ENCODE measurements at regions of chr3 and their contacts with region 1.

Region 1: GRCh38 chr3:38651154-38651789 is 1.8 kb upstream of the SCN5A start:
- DNase-seq: peak; percentile 80
- ATAC-seq: peak; percentile 73
- H3K4me3 Mint-ChIP-seq: no peak overlapping the region
- H3K27ac Mint-ChIP-seq: no peak overlapping the region
- H3K4me1 Mint-ChIP-seq: peaks cover 8% of the 10 kb centered on the region
- H3K27me3 Mint-ChIP-seq: peaks cover 19% of the 10 kb centered on the region
- CTCF ChIP-seq: peak; percentile 97

Region 2: DNA sequence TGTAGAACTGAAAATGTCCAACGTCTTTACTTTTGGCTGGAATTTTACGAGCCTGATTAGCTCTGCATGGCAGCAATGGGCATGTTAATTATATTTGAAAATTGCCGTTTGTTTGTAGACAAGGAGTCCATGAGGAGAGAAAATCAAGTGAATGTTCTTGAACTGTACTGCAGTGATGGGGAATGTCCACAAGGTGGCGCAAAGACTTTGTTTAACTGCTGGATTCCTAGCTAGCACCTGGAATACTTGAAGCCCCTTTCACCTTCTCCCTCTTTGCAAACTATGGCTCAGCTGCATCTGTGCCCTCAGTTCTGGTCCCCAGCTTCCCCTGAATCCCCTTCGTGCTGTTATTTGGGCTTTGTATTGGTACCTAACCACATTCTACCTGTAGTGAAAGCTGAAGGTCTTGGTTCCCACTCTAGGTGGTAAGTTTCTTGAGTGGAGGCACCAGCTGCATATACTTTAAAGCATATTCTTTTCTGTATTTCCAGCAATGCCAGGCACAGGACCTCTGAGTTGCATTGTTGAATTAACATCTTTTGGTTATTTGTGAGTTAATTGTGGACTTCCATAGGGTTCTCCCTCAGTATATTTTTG is 129.8 kb before region 1 on chr3:
- CTCF ChIA-PET with region 1: interaction called, 190 read pairs
- POLR2A ChIA-PET with region 1: interaction called, 3 read pairs
- intact Hi-C with region 1: loop called (anchors 2 kb)
- DNase-seq: peak; percentile 78
- ATAC-seq: peak; percentile 85
- H3K4me3 Mint-ChIP-seq: no peak overlapping the region
- H3K27ac Mint-ChIP-seq: no peak overlapping the region
- H3K4me1 Mint-ChIP-seq: peaks cover 22% of the 10 kb centered on the region
- H3K27me3 Mint-ChIP-seq: no peaks in the 10 kb centered on the region
- CTCF ChIP-seq: peak; percentile 93

Region 3: GRCh38 chr3:38662544-38662943 is 11.3 kb after region 1 on chr3:
- CTCF ChIA-PET with region 1: interaction called, 21 read pairs
- POLR2A ChIA-PET with region 1: interaction called, 3 read pairs
- intact Hi-C with region 1: no loop called
- DNase-seq: no peak
- ATAC-seq: no peak
- H3K4me3 Mint-ChIP-seq: no peak overlapping the region
- H3K27ac Mint-ChIP-seq: no peak overlapping the region
- H3K4me1 Mint-ChIP-seq: no peaks in the 10 kb centered on the region
- H3K27me3 Mint-ChIP-seq: peaks cover 28% of the 10 kb centered on the region
- CTCF ChIP-seq: peak; percentile 39

Region 4: DNA sequence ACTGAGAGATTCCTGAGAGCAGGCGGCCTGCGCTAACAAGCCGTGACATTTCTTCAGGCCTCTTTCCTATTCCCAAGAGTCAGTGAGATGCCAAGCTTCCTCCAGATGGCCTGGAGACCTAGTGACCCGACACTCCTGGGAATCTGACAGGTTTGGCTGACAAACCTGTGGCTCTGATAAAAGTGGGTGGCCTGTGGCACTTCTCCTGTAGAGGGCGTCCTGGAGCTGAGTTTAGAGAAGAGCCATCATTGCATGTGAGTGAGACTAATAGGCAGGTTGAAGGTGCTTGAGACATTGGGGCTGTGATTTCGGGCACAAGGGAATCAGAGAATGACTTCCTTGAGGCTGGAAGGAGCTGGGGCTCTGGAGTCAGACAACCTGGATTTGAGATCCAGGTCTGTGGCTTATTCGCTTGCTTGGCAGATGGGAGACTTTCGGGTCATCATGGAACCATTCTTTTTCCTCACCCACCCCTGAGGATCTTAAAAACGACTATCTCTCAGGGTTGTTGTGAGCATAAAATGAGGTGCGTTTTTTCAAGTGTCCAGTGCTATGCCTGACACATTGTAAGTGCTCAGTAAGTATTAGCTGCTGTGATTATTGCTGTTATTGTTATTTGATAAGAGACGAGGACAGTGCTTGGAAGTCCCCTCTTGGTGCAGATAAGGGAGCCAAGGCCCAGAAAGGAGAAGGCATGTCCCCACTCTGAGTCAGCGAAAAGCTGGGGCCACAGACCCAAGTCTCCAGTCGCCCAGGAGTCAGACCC is 87.5 kb after region 1 on chr3:
- CTCF ChIA-PET with region 1: no interaction called
- POLR2A ChIA-PET with region 1: no interaction called
- intact Hi-C with region 1: no loop called
- DNase-seq: peak; percentile 74
- ATAC-seq: no peak
- H3K4me3 Mint-ChIP-seq: no peak overlapping the region
- H3K27ac Mint-ChIP-seq: no peak overlapping the region
- H3K4me1 Mint-ChIP-seq: no peaks in the 10 kb centered on the region
- H3K27me3 Mint-ChIP-seq: peaks cover 19% of the 10 kb centered on the region
- CTCF ChIP-seq: peak; percentile 64

Region 5: GRCh38 chr3:38843898-38844297 is 192.6 kb after region 1 on chr3:
- CTCF ChIA-PET with region 1: interaction called, 9 read pairs
- POLR2A ChIA-PET with region 1: no interaction called
- intact Hi-C with region 1: loop called (anchors 10 kb)
- DNase-seq: peak; percentile 26
- ATAC-seq: peak; percentile 64
- H3K4me3 Mint-ChIP-seq: no peak overlapping the region
- H3K27ac Mint-ChIP-seq: no peak overlapping the region
- H3K4me1 Mint-ChIP-seq: no peaks in the 10 kb centered on the region
- H3K27me3 Mint-ChIP-seq: peaks cover 19% of the 10 kb centered on the region
- CTCF ChIP-seq: peak; percentile 46

Region 6: GRCh38 chr3:38890426-38890825 is 239.2 kb after region 1 on chr3:
- CTCF ChIA-PET with region 1: no interaction called
- POLR2A ChIA-PET with region 1: no interaction called
- intact Hi-C with region 1: no loop called
- DNase-seq: no peak
- ATAC-seq: no peak
- H3K4me3 Mint-ChIP-seq: no peak overlapping the region
- H3K27ac Mint-ChIP-seq: no peak overlapping the region
- H3K4me1 Mint-ChIP-seq: no peaks in the 10 kb centered on the region
- H3K27me3 Mint-ChIP-seq: no peaks in the 10 kb centered on the region
- CTCF ChIP-seq: no peak

Region 7: GRCh38 chr3:39067286-39067685 is 416.0 kb after region 1 on chr3:
- CTCF ChIA-PET with region 1: no interaction called
- POLR2A ChIA-PET with region 1: no interaction called
- intact Hi-C with region 1: no loop called
- DNase-seq: no peak
- ATAC-seq: no peak
- H3K4me3 Mint-ChIP-seq: no peak overlapping the region
- H3K27ac Mint-ChIP-seq: no peak overlapping the region
- H3K4me1 Mint-ChIP-seq: peaks cover 10% of the 10 kb centered on the region
- H3K27me3 Mint-ChIP-seq: no peaks in the 10 kb centered on the region
- CTCF ChIP-seq: no peak

Measured in activated CD8-positive, alpha-beta T cell treated with anti-CD3 and anti-CD28 coated beads for 36 hours (primary cell).